Activated naive CD4-positive, alpha-beta T cell treated with anti-CD3 and anti-CD28 coated beads for 36 hours (primary cell): ENCODE measurements at regions of chr14 and their contacts with region 1.

Region 1: GRCh38 chr14:61025251-61026223 is 44.5 kb downstream of the SLC38A6 start:
- DNase-seq: peak; percentile 76
- H3K4me3 Mint-ChIP-seq: no peak overlapping the region
- H3K27ac Mint-ChIP-seq: no peak overlapping the region
- H3K4me1 Mint-ChIP-seq: no peaks in the 10 kb centered on the region
- H3K27me3 Mint-ChIP-seq: no peaks in the 10 kb centered on the region

Region 2: DNA sequence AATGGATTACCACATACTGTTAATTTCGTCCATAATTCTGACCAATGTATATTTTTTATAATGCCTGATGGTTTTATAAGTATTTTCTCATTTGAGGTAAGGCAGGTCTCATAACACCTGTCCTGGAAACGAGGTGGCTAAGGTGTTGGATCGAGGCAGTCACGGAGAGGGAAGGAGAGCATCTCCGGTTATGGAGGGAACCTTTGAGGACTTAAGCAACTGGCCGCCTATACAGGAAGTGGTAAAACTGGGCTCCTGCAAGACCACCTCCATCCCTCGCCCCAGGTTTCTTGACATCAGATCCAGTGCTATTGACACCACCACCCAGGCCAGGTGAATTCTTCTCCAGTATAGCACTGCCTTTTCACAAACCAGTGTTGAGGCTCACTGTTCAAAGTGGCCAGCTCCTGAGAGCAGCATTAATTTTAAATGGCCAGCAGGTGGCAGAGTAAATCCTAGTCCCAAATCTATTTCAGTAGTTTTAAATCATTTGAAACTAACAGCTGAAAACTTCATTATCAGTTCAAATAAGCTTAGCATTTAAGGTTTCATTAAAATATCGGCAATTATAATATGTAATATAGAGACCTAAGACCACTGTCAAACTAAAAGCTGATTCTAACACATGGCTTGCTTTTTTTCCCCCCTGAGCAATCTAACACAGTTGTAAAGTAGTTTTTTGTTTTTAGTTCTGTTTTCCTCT is 675.7 kb before region 1 on chr14:
- CTCF ChIA-PET with region 1: no interaction called
- intact Hi-C with region 1: loop called (anchors 5 kb)
- DNase-seq: peak; percentile 51
- H3K4me3 Mint-ChIP-seq: no peak overlapping the region
- H3K27ac Mint-ChIP-seq: no peak overlapping the region
- H3K4me1 Mint-ChIP-seq: no peaks in the 10 kb centered on the region
- H3K27me3 Mint-ChIP-seq: peaks cover 3% of the 10 kb centered on the region

Region 3: GRCh38 chr14:60647081-60647836 is 378.3 kb before region 1 on chr14:
- CTCF ChIA-PET with region 1: interaction called, 4 read pairs
- intact Hi-C with region 1: loop called (anchors 5 kb)
- DNase-seq: no peak
- H3K4me3 Mint-ChIP-seq: peak overlapping the region; percentile 38
- H3K27ac Mint-ChIP-seq: no peak overlapping the region
- H3K4me1 Mint-ChIP-seq: peaks cover 50% of the 10 kb centered on the region
- H3K27me3 Mint-ChIP-seq: peaks cover 85% of the 10 kb centered on the region

Region 4: GRCh38 chr14:60724137-60724619 is 301.4 kb before region 1 on chr14 and contains the start of gene SIX4:
- CTCF ChIA-PET with region 1: no interaction called
- intact Hi-C with region 1: loop called (anchors 2 kb)
- DNase-seq: peak; percentile 15
- H3K4me3 Mint-ChIP-seq: peak within 1 kb of the TSS; percentile 78
- H3K27ac Mint-ChIP-seq: no peak within 1 kb of the TSS
- H3K4me1 Mint-ChIP-seq: peaks cover 19% of the 10 kb centered on the region
- H3K27me3 Mint-ChIP-seq: peaks cover 71% of the 10 kb centered on the region
- total RNA-seq, gene SIX4: not detected

Region 5: DNA sequence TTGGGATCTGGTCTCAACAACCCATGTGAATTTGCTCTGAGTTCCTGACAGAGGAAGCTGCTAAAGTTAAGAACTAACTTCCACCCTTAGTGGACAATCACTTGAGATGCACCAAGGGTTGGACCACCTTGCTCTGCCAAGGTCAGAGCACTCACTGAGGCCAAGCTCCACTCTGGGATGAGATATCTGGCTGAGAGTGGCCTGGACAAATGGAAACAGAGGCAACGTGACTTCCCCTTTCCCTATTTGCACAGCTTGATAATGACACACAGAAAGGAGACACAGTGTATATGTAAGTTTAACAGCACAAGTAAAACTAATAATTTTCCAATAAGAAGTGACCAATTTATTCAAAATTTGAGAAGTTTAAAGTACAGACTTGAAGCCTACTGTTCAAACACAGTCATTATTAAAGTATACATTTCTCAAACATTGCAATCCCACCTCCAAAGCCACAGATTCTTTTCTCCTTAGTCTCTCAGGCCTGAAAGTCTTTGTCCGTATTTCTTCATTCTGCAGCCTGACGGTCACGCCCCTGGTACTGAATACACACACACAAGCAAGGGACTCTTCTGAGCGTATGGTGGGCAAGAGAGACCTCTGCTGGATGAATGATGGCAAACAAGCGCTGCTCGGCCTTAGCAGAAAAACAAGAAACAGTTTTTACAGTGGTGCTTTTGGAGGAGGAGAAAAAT is 227.0 kb after region 1 on chr14:
- CTCF ChIA-PET with region 1: interaction called, 5 read pairs
- intact Hi-C with region 1: loop called (anchors 2 kb)
- DNase-seq: peak; percentile 83
- H3K4me3 Mint-ChIP-seq: no peak overlapping the region
- H3K27ac Mint-ChIP-seq: no peak overlapping the region
- H3K4me1 Mint-ChIP-seq: no peaks in the 10 kb centered on the region
- H3K27me3 Mint-ChIP-seq: peaks cover 7% of the 10 kb centered on the region

Region 6: GRCh38 chr14:61280526-61281185 is 255.1 kb after region 1 on chr14:
- CTCF ChIA-PET with region 1: no interaction called
- intact Hi-C with region 1: no loop called
- DNase-seq: peak; percentile 81
- H3K4me3 Mint-ChIP-seq: peak overlapping the region; percentile 88
- H3K27ac Mint-ChIP-seq: peak overlapping the region; percentile 67
- H3K4me1 Mint-ChIP-seq: peaks cover 29% of the 10 kb centered on the region
- H3K27me3 Mint-ChIP-seq: no peaks in the 10 kb centered on the region